OCI-LY7 (cell line): ENCODE measurements at regions of chr3 and their contacts with region 1.

Region 1: DNA sequence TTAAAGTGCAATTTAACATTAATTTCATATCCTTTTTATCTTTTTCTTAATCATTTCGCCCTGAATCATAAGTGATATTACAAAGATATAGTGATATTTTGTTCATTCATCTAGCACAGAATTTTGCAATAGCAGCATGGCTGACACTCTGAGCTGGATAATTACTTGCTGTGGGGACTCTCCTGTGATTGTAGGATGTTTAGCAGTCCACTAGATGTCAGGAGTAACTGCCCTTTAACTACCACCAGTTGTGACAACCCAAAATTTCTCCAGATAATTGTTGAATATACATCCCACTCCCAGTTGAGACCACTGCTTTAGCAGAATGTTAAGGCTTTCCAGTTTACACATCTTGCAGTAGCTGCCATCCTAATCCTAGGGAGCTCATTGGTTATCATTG is 196.8 kb upstream of the MBNL1 start:
- DNase-seq: peak; percentile 38
- H3K4me3 ChIP-seq: no peak overlapping the region
- H3K27ac ChIP-seq: no peak overlapping the region
- H3K4me1 ChIP-seq: no peaks in the 10 kb centered on the region
- CTCF ChIP-seq: peak; percentile 80

Region 2: GRCh38 chr3:152524198-152525140 is 452.5 kb after region 1 on chr3:
- CTCF ChIA-PET with region 1: no interaction called
- POLR2A ChIA-PET with region 1: no interaction called
- intact Hi-C with region 1: loop called (anchors 5 kb)
- DNase-seq: peak; percentile 56
- H3K4me3 ChIP-seq: no peak overlapping the region
- H3K27ac ChIP-seq: no peak overlapping the region
- H3K4me1 ChIP-seq: no peaks in the 10 kb centered on the region
- CTCF ChIP-seq: peak; percentile 98